Colonic mucosa (tissue), 4 donors: ENCODE measurements at regions of chr12 and their contacts with region 1.

Region 1: DNA sequence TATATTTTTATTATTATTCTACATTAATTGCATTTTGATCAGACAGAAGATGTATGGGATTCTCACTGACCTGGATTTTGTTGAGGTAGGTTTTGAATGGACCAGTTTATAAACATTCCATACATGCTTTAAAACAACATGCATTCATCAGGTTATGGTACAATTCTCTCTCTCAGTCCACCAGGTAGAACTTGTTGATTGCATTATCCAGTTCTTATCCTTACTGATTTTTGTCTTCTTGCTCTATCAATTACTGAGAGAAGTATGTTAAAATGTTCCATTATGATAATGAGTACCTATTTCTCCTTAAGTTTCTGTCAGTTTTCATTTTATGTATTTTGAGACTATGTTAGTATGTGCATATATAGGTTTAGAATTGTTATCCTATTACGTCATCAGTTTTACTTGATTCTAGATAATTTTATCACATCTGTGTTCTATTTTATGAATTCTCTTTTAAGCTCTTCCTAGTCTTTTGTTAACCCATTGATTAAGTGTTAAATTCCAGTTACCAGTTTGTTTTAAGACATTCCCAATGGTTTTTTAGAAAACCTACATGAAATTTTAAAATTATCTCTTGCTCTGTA is 50.6 kb downstream of the EP400 start:
- DNase-seq: no peak
- H3K4me3 ChIP-seq: no peak overlapping the region
- H3K27ac ChIP-seq: no peak overlapping the region
- H3K4me1 ChIP-seq: no peaks in the 10 kb centered on the region
- H3K27me3 ChIP-seq: no peaks in the 10 kb centered on the region
- CTCF ChIP-seq: no peak

Region 2: DNA sequence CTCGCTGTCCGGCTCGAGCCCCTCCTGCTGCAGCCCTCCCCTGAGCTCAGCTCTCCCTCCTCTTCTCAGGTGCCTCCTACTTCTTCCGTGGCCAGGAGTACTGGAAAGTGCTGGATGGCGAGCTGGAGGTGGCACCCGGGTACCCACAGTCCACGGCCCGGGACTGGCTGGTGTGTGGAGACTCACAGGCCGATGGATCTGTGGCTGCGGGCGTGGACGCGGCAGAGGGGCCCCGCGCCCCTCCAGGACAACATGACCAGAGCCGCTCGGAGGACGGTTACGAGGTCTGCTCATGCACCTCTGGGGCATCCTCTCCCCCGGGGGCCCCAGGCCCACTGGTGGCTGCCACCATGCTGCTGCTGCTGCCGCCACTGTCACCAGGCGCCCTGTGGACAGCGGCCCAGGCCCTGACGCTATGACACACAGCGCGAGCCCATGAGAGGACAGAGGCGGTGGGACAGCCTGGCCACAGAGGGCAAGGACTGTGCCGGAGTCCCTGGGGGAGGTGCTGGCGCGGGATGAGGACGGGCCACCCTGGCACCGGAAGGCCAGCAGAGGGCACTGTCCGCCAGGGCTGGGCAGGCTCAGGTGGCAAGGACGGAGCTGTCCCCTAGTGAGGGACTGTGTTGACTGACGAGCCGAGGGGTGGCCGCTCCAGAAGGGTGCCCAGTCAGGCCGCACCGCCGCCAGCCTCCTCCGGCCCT is 149.4 kb before region 1 on chr12:
- intact Hi-C with region 1: loop called (anchors 2 kb)
- DNase-seq: no peak
- H3K4me3 ChIP-seq: no peak overlapping the region
- H3K27ac ChIP-seq: no peak overlapping the region
- H3K4me1 ChIP-seq: no peaks in the 10 kb centered on the region
- H3K27me3 ChIP-seq: peaks cover 5% of the 10 kb centered on the region
- CTCF ChIP-seq: peak; percentile 75

Region 3: GRCh38 chr12:132040906-132041606 is 40.7 kb after region 1 on chr12:
- intact Hi-C with region 1: no loop called
- DNase-seq: no peak
- H3K4me3 ChIP-seq: no peak overlapping the region
- H3K27ac ChIP-seq: no peak overlapping the region
- H3K4me1 ChIP-seq: no peaks in the 10 kb centered on the region
- H3K27me3 ChIP-seq: no peaks in the 10 kb centered on the region
- CTCF ChIP-seq: no peak

Region 4: GRCh38 chr12:132078190-132078589 is 77.8 kb after region 1 on chr12:
- intact Hi-C with region 1: no loop called
- DNase-seq: no peak
- H3K4me3 ChIP-seq: no peak overlapping the region
- H3K27ac ChIP-seq: no peak overlapping the region
- H3K4me1 ChIP-seq: no peaks in the 10 kb centered on the region
- H3K27me3 ChIP-seq: no peaks in the 10 kb centered on the region
- CTCF ChIP-seq: no peak